Spleen (tissue), 13 donors: ENCODE measurements at regions of chr20 and their contacts with region 1.

Region 1: DNA sequence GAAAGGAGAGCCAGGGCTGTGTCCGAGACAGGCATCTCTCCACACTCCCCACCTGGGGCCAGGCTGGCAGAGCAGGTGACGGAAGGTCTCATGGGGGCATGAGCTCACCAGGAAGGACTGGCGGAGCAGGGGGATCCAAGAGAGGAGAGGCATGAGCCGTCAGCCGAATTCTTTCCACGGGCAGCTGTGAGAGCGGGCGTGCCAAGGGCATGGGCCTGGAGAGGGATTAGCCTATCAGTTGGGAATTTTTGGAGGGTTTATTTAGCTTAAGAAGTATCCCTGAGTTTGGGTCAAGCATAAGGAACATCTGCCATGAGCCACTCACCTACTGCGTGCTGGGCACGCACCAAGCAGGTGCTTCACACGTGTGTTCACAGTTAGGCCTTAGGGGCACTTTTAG is 60.2 kb upstream of the ZNFX1 start:
- DNase-seq: no peak
- H3K4me3 ChIP-seq: no peak overlapping the region
- H3K27ac ChIP-seq: no peak overlapping the region
- H3K4me1 ChIP-seq: peaks cover 0 to 9% (median 0%) of the 10 kb centered on the region in 6 donors
- H3K27me3 ChIP-seq: peaks cover 0 to 25% (median 7%) of the 10 kb centered on the region in 7 donors
- CTCF ChIP-seq: no peak
- POLR2A ChIP-seq: no peak

Region 2: GRCh38 chr20:49493814-49494213 is 155.8 kb after region 1 on chr20:
- intact Hi-C with region 1: no loop called
- DNase-seq: no peak
- H3K4me3 ChIP-seq: no peak overlapping the region
- H3K27ac ChIP-seq: no peak overlapping the region
- H3K4me1 ChIP-seq: no peaks in the 10 kb centered on the region
- H3K27me3 ChIP-seq: peaks cover 0 to 73% (median 4%) of the 10 kb centered on the region in 7 donors
- CTCF ChIP-seq: no peak
- POLR2A ChIP-seq: no peak

Region 3: DNA sequence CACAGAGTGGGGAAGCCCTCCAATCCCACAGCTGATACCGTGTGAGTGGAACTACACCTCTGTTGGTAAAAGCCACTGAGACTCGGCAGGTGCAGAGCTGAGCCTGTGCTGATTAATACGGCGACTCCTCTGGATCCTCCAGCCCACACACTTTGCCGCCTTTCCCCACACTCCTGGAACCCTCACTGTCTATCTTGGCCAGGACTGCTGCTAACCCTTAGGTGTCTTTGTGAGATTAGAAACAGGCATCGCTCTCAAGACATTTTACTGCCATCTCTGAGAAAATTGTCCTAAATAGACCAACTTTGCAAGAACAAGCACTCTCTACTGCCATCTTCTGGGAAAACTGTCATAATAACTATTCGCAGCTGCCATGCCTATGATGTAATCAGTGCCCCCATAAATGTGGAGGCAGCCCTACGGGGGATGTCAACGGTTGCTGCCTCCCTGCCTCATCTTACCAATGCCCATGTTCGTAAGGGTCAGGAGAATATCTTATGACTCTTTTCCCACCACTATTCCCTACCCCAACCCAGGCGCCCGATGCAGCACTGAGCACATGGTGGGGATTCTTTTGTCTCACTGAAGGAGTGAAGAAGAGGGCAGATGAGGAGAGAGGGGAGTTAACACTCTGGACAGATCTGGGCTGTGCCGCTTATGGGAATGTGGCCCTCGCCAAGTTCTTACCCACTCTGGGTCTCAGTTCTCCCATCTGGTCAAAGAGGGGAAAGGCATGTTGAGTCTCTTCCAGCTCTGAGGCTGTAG is 170.6 kb after region 1 on chr20:
- intact Hi-C with region 1: loop called (anchors 10 kb)
- DNase-seq: no peak
- H3K4me3 ChIP-seq: no peak overlapping the region
- H3K27ac ChIP-seq: no peak overlapping the region
- H3K4me1 ChIP-seq: no peaks in the 10 kb centered on the region
- H3K27me3 ChIP-seq: peaks cover 0 to 93% (median 16%) of the 10 kb centered on the region in 7 donors
- CTCF ChIP-seq: peak in 7 of 11 experiments; percentile 34 to 58 (median 44)
- POLR2A ChIP-seq: no peak

Region 4: GRCh38 chr20:49534255-49534712 is 196.2 kb after region 1 on chr20:
- intact Hi-C with region 1: loop called (anchors 2 kb)
- DNase-seq: no peak
- H3K4me3 ChIP-seq: no peak overlapping the region
- H3K27ac ChIP-seq: no peak overlapping the region
- H3K4me1 ChIP-seq: peaks cover 0 to 14% (median 10%) of the 10 kb centered on the region in 6 donors
- H3K27me3 ChIP-seq: peaks cover 0 to 27% (median 0%) of the 10 kb centered on the region in 7 donors
- CTCF ChIP-seq: peak; percentile 58 to 91 (median 82)
- POLR2A ChIP-seq: no peak